ENCODE measurements at regions of chr10 and their contacts with region 1.

Region 1: GRCh38 chr10:88944813-88945212 is 7.8 kb downstream of the ACTA2 start:
- DNase-seq: no peak
- H3K4me3 ChIP-seq: no peak overlapping the region
- H3K27ac ChIP-seq: peak overlapping the region in 2 of 5 donors; percentile 4 to 60
- H3K4me1 ChIP-seq: peaks cover 0 to 54% (median 24%) of the 10 kb centered on the region in 4 donors
- H3K27me3 ChIP-seq: no peaks in the 10 kb centered on the region
- CTCF ChIP-seq: no peak
- EP300 ChIP-seq: no peak
- POLR2A ChIP-seq: no peak

Region 2: GRCh38 chr10:88227342-88228018 is 717.3 kb before region 1 on chr10:
- intact Hi-C with region 1: no loop called
- DNase-seq: peak; percentile 32 to 71
- H3K4me3 ChIP-seq: no peak overlapping the region
- H3K27ac ChIP-seq: peak overlapping the region in 2 of 5 donors; percentile 10 to 23
- H3K4me1 ChIP-seq: peaks cover 0 to 16% (median 4%) of the 10 kb centered on the region in 4 donors
- H3K27me3 ChIP-seq: no peaks in the 10 kb centered on the region
- CTCF ChIP-seq: no peak
- EP300 ChIP-seq: no peak
- POLR2A ChIP-seq: no peak

Region 3: GRCh38 chr10:88983206-88983605 is 38.4 kb after region 1 on chr10:
- intact Hi-C with region 1: loop called (anchors 5 kb)
- DNase-seq: peak in 1 of 2 donors; percentile 43
- H3K4me3 ChIP-seq: no peak overlapping the region
- H3K27ac ChIP-seq: peak overlapping the region in 4 of 5 donors; percentile 72 to 84 (median 75)
- H3K4me1 ChIP-seq: peaks cover 6 to 84% (median 55%) of the 10 kb centered on the region in 4 donors
- H3K27me3 ChIP-seq: no peaks in the 10 kb centered on the region
- CTCF ChIP-seq: no peak
- EP300 ChIP-seq: no peak
- POLR2A ChIP-seq: no peak

Region 4: GRCh38 chr10:89147256-89147655 is 202.4 kb after region 1 on chr10:
- intact Hi-C with region 1: no loop called
- DNase-seq: no peak
- H3K4me3 ChIP-seq: no peak overlapping the region
- H3K27ac ChIP-seq: no peak overlapping the region
- H3K4me1 ChIP-seq: no peaks in the 10 kb centered on the region
- H3K27me3 ChIP-seq: no peaks in the 10 kb centered on the region
- CTCF ChIP-seq: no peak
- EP300 ChIP-seq: no peak
- POLR2A ChIP-seq: no peak

Region 5: DNA sequence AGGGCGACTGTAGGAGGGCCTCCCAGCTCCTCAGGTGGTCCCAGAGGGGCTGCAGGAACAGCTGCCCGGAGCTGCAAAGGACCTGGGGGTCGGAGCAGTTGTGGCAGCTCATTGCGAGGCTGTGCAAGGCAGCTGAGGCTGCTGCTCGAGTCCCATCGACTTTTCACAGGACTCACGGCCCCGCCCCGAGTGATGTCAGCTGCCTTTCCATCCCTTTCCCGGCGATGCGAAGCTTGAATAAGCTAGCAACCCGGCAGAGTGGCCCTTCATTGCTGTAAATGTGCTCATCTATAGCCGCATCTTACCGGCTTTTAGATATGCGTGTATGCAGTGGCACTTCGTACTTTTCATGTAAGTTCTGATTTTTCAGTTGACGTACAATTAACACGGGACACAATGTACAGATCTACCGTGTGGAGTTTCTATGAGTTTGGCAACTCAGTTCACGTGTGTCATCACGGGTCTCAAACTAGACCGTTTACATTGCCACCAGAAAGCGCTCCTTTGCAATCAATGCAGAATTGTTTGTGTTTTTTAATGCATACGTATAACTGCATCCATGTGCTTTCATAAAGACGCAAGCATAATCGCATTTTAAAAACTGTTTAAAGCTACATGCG is 262.5 kb after region 1 on chr10 and contains the start of gene CH25H:
- intact Hi-C with region 1: loop called (anchors 5 kb)
- DNase-seq: peak; percentile 64 to 89
- H3K4me3 ChIP-seq: peak within 1 kb of the TSS; percentile 49 to 61 (median 52)
- H3K27ac ChIP-seq: peak within 1 kb of the TSS; percentile 56 to 85 (median 81)
- H3K4me1 ChIP-seq: peaks cover 13 to 27% (median 22%) of the 10 kb centered on the region in 4 donors
- H3K27me3 ChIP-seq: peaks cover 0 to 71% (median 39%) of the 10 kb centered on the region in 3 donors
- CTCF ChIP-seq: no peak
- EP300 ChIP-seq: no peak
- POLR2A ChIP-seq: no peak
- total RNA-seq, gene CH25H: 1.7 to 26.3 (median 5.7) TPM in 3 of 5 donors, not detected in the others

Region 6: GRCh38 chr10:90462749-90463470 is 1518.1 kb after region 1 on chr10:
- intact Hi-C with region 1: no loop called
- DNase-seq: no peak
- H3K4me3 ChIP-seq: no peak overlapping the region
- H3K27ac ChIP-seq: no peak overlapping the region
- H3K4me1 ChIP-seq: no peaks in the 10 kb centered on the region
- H3K27me3 ChIP-seq: no peaks in the 10 kb centered on the region
- CTCF ChIP-seq: no peak
- EP300 ChIP-seq: no peak
- POLR2A ChIP-seq: no peak